Gastrocnemius medialis (tissue), 4 donors: ENCODE measurements at regions of chr17 and their contacts with region 1.

Region 1: DNA sequence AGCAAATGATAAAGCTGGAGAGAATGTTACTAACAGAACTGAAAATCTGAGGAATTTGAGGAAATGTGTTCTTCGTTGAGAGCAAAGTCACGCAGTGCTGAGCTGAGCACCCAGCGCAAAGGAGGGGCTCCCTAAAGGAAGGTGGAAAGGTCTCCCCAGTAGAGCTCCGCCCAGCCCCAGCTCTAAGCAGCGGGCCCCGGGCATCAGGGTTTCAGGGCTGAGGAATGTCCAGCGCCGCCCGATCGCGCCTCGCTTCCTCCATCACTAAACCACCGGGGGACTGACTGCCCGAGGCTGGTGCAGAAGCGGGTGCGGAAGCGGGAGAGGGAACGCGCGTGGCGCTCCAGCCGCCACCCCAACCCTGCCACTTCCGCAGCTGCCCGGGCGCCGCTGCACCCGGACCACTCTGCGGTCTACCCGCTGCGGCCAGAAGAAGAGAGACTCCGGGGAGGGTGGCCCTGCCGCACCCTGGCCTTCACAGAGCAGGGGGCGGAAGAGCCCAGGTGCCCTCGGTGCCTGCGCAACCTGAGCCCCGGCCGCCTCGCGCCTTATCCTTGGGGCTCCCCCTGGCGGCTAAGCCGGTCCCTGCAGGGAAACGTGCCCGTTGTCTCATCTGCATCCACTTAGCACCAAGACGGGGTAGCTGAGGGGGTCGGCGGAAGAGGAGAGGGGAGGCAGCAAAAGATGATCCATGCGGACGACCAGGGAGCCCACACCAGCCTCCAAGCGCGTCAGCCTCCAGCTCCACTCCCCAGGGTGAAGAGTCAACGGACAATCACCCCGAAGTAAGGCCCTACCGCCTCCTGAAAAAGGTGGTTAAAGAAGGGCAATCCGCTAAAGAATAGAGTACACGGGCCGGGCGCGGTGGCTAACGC is 12.4 kb upstream of the GUCY2D start:
- DNase-seq: peak; percentile 48 to 69
- ATAC-seq: peak; percentile 76 to 80
- H3K4me3 ChIP-seq: peak overlapping the region; percentile 52 to 95 (median 66)
- H3K27ac ChIP-seq: peak overlapping the region in 2 of 4 donors; percentile 24 to 42
- H3K4me1 ChIP-seq: peaks cover 0 to 9% of the 10 kb centered on the region in 2 donors
- H3K27me3 ChIP-seq: no peaks in the 10 kb centered on the region
- CTCF ChIP-seq: peak; percentile 84 to 98 (median 95)
- POLR2A ChIP-seq: no peak

Region 2: DNA sequence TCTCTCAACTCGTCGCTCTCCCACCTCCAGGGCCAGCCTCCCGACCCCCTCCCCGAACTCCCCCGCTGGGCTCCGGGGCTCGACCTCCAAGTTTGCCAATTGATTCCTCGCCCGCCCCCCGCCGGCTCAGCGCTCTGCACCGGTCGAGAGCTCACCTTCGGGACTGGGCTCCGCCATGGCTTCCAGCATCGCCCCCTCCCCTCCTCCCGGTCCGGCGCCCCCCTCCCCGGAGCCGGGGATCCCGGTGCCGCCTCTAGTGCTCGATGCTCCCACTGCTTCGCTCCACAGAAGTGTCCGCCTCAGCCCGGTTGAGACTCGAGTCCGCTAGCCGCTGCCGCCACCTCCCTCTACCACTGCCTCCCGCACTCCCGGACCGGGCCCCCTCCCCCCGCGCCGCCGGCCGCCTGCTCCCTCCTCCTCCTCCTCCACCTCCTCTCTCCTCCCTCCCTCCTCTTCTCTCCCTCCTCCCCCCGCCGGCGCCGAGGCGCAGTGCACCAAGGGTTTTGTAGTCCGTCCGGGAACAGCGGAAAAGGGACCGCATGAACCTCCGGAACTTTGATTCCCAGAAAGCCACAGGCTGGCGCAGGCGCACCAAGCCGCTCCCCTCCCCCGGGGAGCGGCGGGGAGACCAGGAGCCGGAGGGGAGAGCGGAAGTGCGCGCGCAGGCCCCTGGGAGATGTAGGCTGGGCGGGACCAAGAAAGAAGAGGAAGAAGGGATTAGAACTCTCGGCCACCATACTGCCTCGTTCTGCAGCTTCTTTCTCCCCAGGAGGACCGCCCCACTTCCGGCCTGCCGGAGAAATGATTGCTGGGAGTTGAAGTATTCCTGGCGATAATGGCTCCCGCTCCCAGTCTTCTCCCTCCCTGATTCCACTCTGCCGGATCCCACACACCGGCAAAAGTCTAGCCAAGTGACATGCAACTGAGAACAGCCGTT is 750.7 kb before region 1 on chr17 and contains the start of gene PHF23:
- in situ Hi-C with region 1: no loop called
- intact Hi-C with region 1: no loop called
- DNase-seq: peak; percentile 100
- ATAC-seq: peak; percentile 67 to 75
- H3K4me3 ChIP-seq: peak within 1 kb of the TSS; percentile 78 to 100 (median 98)
- H3K27ac ChIP-seq: peak within 1 kb of the TSS; percentile 92 to 99 (median 98)
- H3K4me1 ChIP-seq: peaks cover 34 to 41% of the 10 kb centered on the region in 2 donors
- H3K27me3 ChIP-seq: no peaks in the 10 kb centered on the region
- CTCF ChIP-seq: peak in 2 of 5 experiments; percentile 24 to 59
- POLR2A ChIP-seq: peak; percentile 92 to 93
- total RNA-seq, gene PHF23: 16.9 to 31.8 (median 24.1) TPM

Region 3: GRCh38 chr17:7745748-7746470 is 244.1 kb before region 1 on chr17:
- in situ Hi-C with region 1: loop called in 2 of 4 experiments (anchors 25 kb)
- intact Hi-C with region 1: loop called (anchors 5 kb)
- DNase-seq: no peak
- ATAC-seq: peak in 1 of 2 donors; percentile 36
- H3K4me3 ChIP-seq: no peak overlapping the region
- H3K27ac ChIP-seq: no peak overlapping the region
- H3K4me1 ChIP-seq: no peaks in the 10 kb centered on the region
- H3K27me3 ChIP-seq: peaks cover 0 to 7% (median 0%) of the 10 kb centered on the region in 3 donors
- CTCF ChIP-seq: no peak
- POLR2A ChIP-seq: no peak

Region 4: GRCh38 chr17:7856883-7857723 is 132.9 kb before region 1 on chr17 and contains the start of gene NAA38:
- in situ Hi-C with region 1: loop called in 3 of 4 experiments (anchors 5 to 25 kb)
- intact Hi-C with region 1: loop called (anchors 1 kb)
- DNase-seq: peak; percentile 97 to 98
- ATAC-seq: peak; percentile 93 to 95
- H3K4me3 ChIP-seq: peak within 1 kb of the TSS; percentile 65 to 87 (median 80)
- H3K27ac ChIP-seq: peak within 1 kb of the TSS; percentile 91 to 99 (median 96)
- H3K4me1 ChIP-seq: peaks cover 26 to 34% of the 10 kb centered on the region in 2 donors
- H3K27me3 ChIP-seq: no peaks in the 10 kb centered on the region
- CTCF ChIP-seq: peak; percentile 4 to 72 (median 63)
- POLR2A ChIP-seq: peak in 1 of 2 donors; percentile 48
- total RNA-seq, gene NAA38: 57.4 to 133 (median 96.6) TPM

Region 5: DNA sequence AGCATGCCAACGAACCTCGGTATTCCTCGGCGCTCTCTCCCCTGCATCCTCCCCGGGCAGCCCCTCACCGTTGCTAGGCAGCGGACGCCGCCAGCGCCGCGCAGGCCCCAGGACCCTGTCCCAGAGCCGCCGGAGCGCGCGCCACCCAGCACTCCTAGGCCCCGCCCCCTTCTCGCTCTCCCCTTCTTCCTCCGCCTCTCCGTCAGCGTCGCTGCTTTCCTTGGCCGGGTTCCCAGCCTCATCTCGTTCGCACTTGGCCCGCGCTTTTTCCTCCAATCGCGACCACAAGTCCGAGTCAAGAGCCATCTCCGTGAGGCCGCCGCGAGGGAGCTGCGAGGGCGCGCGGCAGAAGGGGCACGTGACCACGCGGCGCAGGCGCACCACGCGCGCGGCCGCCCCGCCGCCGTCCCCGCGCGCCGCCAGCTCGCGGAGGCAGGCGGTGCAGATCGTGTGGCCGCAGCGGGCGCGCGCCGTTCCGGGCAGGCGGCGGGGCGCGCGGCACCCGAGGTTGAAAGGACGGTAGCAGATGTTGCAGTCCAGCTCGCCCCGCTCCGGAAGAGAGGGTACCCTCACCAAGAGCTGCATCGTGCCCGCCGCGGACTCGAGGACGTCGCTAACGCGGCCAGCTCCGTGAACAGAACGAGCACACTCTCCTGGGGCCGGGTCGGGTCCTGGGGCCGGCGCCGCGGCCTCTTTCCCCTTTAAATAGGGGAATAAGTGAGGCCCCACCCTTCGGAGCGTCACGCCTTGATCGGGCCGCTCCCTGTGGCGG is 74.2 kb before region 1 on chr17 and contains the start of gene RNF227:
- in situ Hi-C with region 1: loop called (anchors 5 to 10 kb)
- intact Hi-C with region 1: loop called (anchors 1 kb)
- DNase-seq: peak; percentile 66 to 78
- ATAC-seq: peak; percentile 91 to 93
- H3K4me3 ChIP-seq: peak within 1 kb of the TSS; percentile 79 to 81 (median 80)
- H3K27ac ChIP-seq: peak within 1 kb of the TSS; percentile 85 to 92 (median 90)
- H3K4me1 ChIP-seq: peaks cover 17 to 21% of the 10 kb centered on the region in 2 donors
- H3K27me3 ChIP-seq: no peaks in the 10 kb centered on the region
- CTCF ChIP-seq: no peak
- POLR2A ChIP-seq: peak; percentile 56 to 59
- total RNA-seq, gene RNF227: 0.51 to 1.2 (median 0.62) TPM in 3 of 4 donors, not detected in the other

Region 6: DNA sequence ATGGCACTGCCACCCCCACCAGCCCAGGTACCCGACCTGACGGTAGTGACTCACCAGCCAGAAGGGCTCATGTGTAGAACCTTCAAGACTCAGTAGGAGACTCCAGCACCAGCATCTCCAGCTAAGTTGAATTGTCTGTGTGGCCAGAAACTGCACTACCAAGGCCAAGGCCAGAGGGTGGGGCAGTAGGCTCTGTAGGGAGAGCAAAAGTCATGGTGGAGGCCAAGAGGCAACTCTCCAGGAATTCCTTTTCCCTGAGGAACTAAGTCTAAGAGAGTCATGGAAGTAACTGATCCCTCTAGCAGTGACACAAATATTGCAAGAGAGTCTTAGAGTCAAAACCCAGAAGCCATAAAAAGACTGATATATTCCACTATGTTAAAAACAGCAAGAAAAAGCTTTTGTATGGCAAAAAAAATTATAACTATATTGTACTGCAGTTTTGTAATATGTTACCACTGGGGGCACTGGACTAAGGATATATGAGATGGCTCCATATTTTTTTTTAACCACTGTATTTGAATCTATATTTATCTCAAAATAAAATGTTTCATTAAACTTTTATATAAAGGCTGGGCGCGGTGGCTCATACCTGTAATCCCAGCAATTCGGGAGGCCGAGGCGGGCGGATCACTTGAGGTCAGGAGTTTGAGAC is 17.8 kb before region 1 on chr17:
- in situ Hi-C with region 1: no loop called
- intact Hi-C with region 1: loop called (anchors 2 kb)
- DNase-seq: peak; percentile 14 to 75
- ATAC-seq: peak; percentile 95 to 100
- H3K4me3 ChIP-seq: no peak overlapping the region
- H3K27ac ChIP-seq: peak overlapping the region in 2 of 4 donors; percentile 52 to 55
- H3K4me1 ChIP-seq: peaks cover 7 to 11% of the 10 kb centered on the region in 2 donors
- H3K27me3 ChIP-seq: no peaks in the 10 kb centered on the region
- CTCF ChIP-seq: peak in 3 of 5 experiments; percentile 10 to 25 (median 20)
- POLR2A ChIP-seq: no peak